CD4-positive, alpha-beta T cell (primary cell): ENCODE measurements at regions of chrX and their contacts with region 1.

Region 1: DNA sequence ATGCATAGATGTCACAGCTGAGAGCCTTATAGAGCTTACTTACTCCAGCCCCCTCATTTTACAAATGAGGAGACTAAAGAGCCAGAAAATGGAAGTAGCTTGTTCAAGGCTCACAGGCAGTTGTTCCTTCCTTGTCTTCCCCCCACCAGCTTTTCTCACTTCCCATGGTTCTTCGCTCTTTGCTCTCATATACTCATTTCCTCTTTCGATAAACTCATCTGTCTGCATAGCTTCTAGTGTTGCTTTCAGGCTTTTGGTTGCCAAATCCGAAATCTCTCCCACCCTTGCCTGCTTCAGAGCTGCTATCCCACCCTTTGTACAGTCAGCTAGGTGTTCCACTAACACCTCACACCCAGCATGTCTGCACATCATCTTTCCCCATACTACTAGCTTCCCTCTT is 25.0 kb upstream of the GJB1 start:
- DNase-seq: peak in 4 of 14 experiments; percentile 18 to 59 (median 44)
- ATAC-seq: peak; percentile 49
- H3K4me3 ChIP-seq: peak overlapping the region; percentile 66
- H3K4me3 Mint-ChIP-seq: peak overlapping the region; percentile 84
- H3K27ac ChIP-seq: peak overlapping the region in 1 of 2 donors; percentile 34
- H3K27ac Mint-ChIP-seq: peak overlapping the region; percentile 77
- H3K4me1 ChIP-seq: peaks cover 12% of the 10 kb centered on the region
- H3K4me1 Mint-ChIP-seq: peaks cover 31% of the 10 kb centered on the region
- H3K27me3 ChIP-seq: no peaks in the 10 kb centered on the region
- H3K27me3 Mint-ChIP-seq: no peaks in the 10 kb centered on the region
- CTCF ChIP-seq: no peak

Region 2: DNA sequence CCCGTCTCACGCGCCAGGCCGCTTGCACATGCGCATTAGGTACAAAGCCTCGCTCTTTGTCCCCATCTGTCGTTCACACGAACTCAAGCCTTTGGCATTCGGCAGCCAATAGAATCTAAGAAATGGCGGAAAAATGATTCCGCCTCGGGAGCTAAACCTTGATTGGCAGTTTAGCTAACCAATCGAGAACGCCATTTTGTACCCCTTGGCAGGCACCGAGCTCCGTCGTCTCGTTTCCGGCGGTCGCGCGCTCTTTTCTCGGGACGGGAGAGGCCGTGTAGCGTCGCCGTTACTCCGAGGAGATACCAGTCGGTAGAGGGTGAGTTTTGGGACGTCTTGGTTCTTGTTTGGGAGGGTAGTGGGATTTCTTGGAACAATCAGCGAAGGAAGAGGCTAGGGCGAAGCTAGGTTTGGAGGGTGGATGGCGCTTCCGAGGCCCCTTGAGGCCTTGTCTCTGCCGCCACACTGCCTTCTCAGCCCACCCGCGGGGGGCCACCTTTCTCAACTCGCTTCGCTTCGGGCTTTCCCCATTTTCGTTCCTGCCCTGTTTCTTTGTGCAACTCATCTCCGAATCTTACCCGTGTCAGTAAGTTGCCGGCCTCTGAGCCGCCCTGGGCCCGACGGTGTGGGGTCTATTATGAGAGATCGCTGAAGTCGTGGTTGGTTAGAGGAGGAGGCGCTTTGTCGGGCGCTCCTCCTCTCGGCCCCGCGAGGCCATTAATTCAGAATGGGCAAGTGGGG is 85.5 kb after region 1 on chrX and contains the start of gene NONO:
- CTCF ChIA-PET with region 1: interaction called, 4 read pairs
- POLR2A ChIA-PET with region 1: interaction called, 17 read pairs
- intact Hi-C with region 1: no loop called
- DNase-seq: peak; percentile 62 to 97 (median 78)
- ATAC-seq: peak; percentile 86
- H3K4me3 ChIP-seq: peak within 1 kb of the TSS; percentile 89
- H3K4me3 Mint-ChIP-seq: peak within 1 kb of the TSS; percentile 98
- H3K27ac ChIP-seq: peak within 1 kb of the TSS; percentile 85 to 97
- H3K27ac Mint-ChIP-seq: peak within 1 kb of the TSS; percentile 99
- H3K4me1 ChIP-seq: peaks cover 28% of the 10 kb centered on the region
- H3K4me1 Mint-ChIP-seq: peaks cover 34% of the 10 kb centered on the region
- H3K27me3 ChIP-seq: no peaks in the 10 kb centered on the region
- H3K27me3 Mint-ChIP-seq: no peaks in the 10 kb centered on the region
- CTCF ChIP-seq: no peak
- total RNA-seq, gene NONO: 440 to 472 TPM